ENCODE measurements at regions of chr2 and their contacts with region 1.

Region 1: GRCh38 chr2:227890495-227891079 is 19.2 kb downstream of the DAW1 start:
- DNase-seq: peak; percentile 40
- ATAC-seq: peak; percentile 72
- H3K4me3 ChIP-seq: no peak overlapping the region
- H3K27ac ChIP-seq: no peak overlapping the region
- H3K4me1 ChIP-seq: peaks cover 0 to 7% of the 10 kb centered on the region in 2 experiments; a peak in 2 of 4 replicates
- H3K27me3 ChIP-seq: no peaks in the 10 kb centered on the region
- CTCF ChIP-seq: peak; percentile 36 to 59 (median 42); a peak in 3 of 6 replicates
- POLR2A ChIP-seq: no peak
- RAD21 ChIP-seq: peak; percentile 76

Region 2: DNA sequence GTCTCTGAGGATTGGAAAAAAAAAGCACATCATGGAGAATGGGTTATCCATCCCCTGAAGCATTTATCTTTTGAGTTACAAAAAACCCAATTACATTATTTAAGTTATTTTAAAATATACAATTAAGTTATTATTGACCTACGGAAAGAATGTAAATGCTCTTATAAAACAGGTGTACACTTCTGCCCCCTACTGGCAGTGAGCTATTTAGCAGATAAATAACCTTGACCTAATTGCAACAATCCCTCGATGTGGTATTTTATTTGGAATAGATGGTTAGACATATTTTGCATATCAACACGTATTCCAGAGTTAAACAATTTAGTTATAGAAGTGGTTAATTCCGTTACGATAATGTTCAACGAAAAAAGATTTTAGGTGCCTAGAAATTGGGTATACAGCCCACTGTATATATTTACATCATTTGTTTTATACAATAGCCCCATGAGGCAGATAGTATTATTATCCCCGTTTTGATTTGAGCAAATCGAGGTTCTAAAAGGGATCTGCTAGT is 28.3 kb before region 1 on chr2:
- CTCF ChIA-PET with region 1: interaction called, 12 read pairs
- POLR2A ChIA-PET with region 1: no interaction called
- RAD21 ChIA-PET with region 1: no interaction called
- intact Hi-C with region 1: no loop called
- DNase-seq: peak; percentile 51
- ATAC-seq: no peak
- H3K4me3 ChIP-seq: peak overlapping the region in 1 of 2 experiments; percentile 42; a peak in 2 of 4 replicates
- H3K27ac ChIP-seq: peak overlapping the region; percentile 64
- H3K4me1 ChIP-seq: peaks cover 14 to 28% of the 10 kb centered on the region in 2 experiments
- H3K27me3 ChIP-seq: no peaks in the 10 kb centered on the region
- CTCF ChIP-seq: peak; percentile 68 to 84 (median 70); a peak in 5 of 6 replicates
- POLR2A ChIP-seq: no peak
- RAD21 ChIP-seq: peak; percentile 77

Region 3: DNA sequence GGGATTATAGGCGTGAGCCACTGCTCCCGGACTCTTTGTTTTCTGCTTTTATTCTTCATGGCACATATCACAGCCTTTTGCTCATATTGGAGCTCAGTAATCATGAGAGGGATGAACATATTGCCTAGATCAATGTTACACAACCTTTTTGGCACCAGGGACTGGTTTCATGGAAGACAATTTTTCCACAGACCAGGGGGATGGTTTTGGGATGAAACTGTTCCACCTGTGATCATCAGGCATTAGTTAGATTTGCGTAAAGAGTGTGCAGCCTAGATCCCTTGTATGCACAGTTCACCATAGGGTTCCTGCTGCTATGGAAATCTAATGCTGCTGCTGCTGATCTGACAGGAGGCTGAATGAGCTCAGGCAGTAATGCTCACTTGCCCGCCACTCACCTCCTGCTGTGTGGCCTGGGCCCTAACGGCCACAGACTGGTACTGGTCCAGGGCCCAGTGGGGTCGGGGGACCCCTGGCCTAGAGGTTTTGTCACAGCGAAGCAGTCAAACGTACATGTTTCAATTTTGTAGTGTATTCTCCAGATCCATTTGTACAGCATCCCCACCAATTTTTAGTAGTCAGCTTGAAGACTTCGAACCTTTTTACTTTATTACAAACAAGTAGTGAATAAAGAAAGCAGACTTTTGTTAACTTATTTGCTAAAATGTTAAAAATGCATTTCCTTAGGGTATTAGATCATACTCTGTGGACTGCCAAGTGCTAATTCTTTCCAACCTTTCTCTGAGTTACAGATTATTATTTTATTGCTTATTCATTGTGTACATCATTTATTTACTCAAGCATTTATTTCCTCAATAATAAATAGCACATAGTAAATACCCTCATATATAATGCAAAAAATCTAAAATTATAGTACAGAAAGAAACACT is 12.9 kb before region 1 on chr2:
- CTCF ChIA-PET with region 1: interaction called, 11 read pairs
- POLR2A ChIA-PET with region 1: interaction called, 3 read pairs
- RAD21 ChIA-PET with region 1: no interaction called
- intact Hi-C with region 1: no loop called
- DNase-seq: no peak
- ATAC-seq: no peak
- H3K4me3 ChIP-seq: no peak overlapping the region
- H3K27ac ChIP-seq: no peak overlapping the region
- H3K4me1 ChIP-seq: no peaks in the 10 kb centered on the region
- H3K27me3 ChIP-seq: no peaks in the 10 kb centered on the region
- CTCF ChIP-seq: no peak
- POLR2A ChIP-seq: no peak
- RAD21 ChIP-seq: no peak

Region 4: DNA sequence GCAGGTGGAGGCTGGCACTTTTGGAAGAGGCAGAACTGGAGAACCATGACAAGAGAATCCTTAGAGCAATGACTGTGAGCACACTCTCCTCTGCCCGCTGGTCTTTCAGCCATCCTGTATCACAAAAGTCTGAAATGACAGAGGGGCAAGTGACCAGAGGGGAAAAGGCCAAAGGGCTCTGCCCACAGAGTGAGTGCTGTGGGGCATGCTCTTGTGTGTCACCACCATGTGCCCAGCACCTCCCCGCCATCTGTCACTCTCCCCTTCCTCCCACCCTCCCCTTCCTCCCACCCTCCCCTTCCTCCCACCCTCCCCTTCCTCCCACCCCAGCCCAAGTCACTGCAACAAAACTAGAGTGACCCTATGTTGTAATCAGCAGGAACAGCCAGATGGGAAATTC is 12.8 kb after region 1 on chr2:
- CTCF ChIA-PET with region 1: interaction called, 10 read pairs
- POLR2A ChIA-PET with region 1: no interaction called
- RAD21 ChIA-PET with region 1: no interaction called
- intact Hi-C with region 1: no loop called
- DNase-seq: no peak
- ATAC-seq: no peak
- H3K4me3 ChIP-seq: no peak overlapping the region
- H3K27ac ChIP-seq: no peak overlapping the region
- H3K4me1 ChIP-seq: no peaks in the 10 kb centered on the region
- H3K27me3 ChIP-seq: 0 out of 2 replicates have a peak, but pooled peaks cover 9% of the 10 kb centered on the region
- CTCF ChIP-seq: no peak
- POLR2A ChIP-seq: no peak
- RAD21 ChIP-seq: no peak

Region 5: DNA sequence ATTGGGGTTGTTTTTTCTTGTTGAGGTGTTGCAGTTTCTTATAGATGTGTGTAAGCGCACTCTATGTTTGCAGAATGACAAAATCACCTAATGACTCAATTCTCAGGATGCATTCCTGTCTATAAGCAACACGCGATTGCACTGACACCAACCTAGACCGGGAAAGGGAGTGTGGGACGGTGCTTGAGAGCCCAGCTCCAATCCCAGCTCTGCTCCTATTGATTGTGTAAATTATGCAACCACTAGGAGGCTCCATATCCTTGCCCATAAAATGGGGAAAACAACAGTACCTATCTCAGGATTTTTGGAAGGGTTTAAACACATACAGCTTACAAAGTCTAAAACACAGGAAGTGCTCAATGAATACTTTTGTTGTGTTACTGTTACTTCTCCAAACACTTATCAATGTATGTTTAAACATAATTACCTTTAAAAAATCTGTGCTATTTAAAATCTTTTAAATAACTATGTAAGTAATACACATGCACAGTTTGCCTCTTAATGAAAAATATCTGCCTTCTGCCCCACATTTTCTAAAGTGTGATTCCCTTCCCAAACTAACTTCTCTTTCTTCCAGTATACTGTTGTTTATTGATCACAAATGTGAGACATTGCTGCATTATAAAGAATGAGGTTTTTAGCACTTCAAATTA is 158.4 kb after region 1 on chr2:
- CTCF ChIA-PET with region 1: interaction called, 4 read pairs
- POLR2A ChIA-PET with region 1: no interaction called
- RAD21 ChIA-PET with region 1: interaction called in 1 of 2 experiments, 9 read pairs
- intact Hi-C with region 1: loop called (anchors 5 kb)
- DNase-seq: peak; percentile 61
- ATAC-seq: peak; percentile 100
- H3K4me3 ChIP-seq: no peak overlapping the region
- H3K27ac ChIP-seq: no peak overlapping the region
- H3K4me1 ChIP-seq: peaks cover 0 to 3% of the 10 kb centered on the region in 2 experiments; a peak in 1 of 4 replicates
- H3K27me3 ChIP-seq: no peaks in the 10 kb centered on the region
- CTCF ChIP-seq: peak; percentile 69 to 76 (median 70)
- POLR2A ChIP-seq: no peak
- RAD21 ChIP-seq: peak; percentile 89

Region 6: GRCh38 chr2:228318218-228318617 is 427.6 kb after region 1 on chr2:
- CTCF ChIA-PET with region 1: no interaction called
- POLR2A ChIA-PET with region 1: no interaction called
- RAD21 ChIA-PET with region 1: no interaction called
- intact Hi-C with region 1: no loop called
- DNase-seq: peak; percentile 27
- ATAC-seq: peak; percentile 90
- H3K4me3 ChIP-seq: no peak overlapping the region
- H3K27ac ChIP-seq: no peak overlapping the region
- H3K4me1 ChIP-seq: no peaks in the 10 kb centered on the region
- H3K27me3 ChIP-seq: no peaks in the 10 kb centered on the region
- CTCF ChIP-seq: peak; percentile 34 to 75 (median 70); a peak in 5 of 6 replicates
- POLR2A ChIP-seq: no peak
- RAD21 ChIP-seq: peak; percentile 60

Region 7: GRCh38 chr2:228657807-228658402 is 767.3 kb after region 1 on chr2:
- CTCF ChIA-PET with region 1: interaction called, 10 read pairs
- POLR2A ChIA-PET with region 1: no interaction called
- RAD21 ChIA-PET with region 1: no interaction called
- intact Hi-C with region 1: loop called (anchors 2 kb)
- DNase-seq: peak; percentile 24
- ATAC-seq: peak; percentile 68; the same call in 1 of the 2 replicates
- H3K4me3 ChIP-seq: no peak overlapping the region
- H3K27ac ChIP-seq: no peak overlapping the region
- H3K4me1 ChIP-seq: no peaks in the 10 kb centered on the region
- H3K27me3 ChIP-seq: no peaks in the 10 kb centered on the region
- CTCF ChIP-seq: peak; percentile 31 to 78 (median 57); a peak in 5 of 6 replicates
- POLR2A ChIP-seq: no peak
- RAD21 ChIP-seq: peak; percentile 91

Region 8: GRCh38 chr2:229273723-229274338 is 1383.2 kb after region 1 on chr2:
- CTCF ChIA-PET with region 1: interaction called, 7 read pairs
- POLR2A ChIA-PET with region 1: no interaction called
- RAD21 ChIA-PET with region 1: no interaction called
- intact Hi-C with region 1: loop called (anchors 5 kb)
- DNase-seq: peak; percentile 81
- ATAC-seq: peak; percentile 99
- H3K4me3 ChIP-seq: peak overlapping the region in 1 of 2 experiments; percentile 18; a peak in 1 of 4 replicates
- H3K27ac ChIP-seq: no peak overlapping the region
- H3K4me1 ChIP-seq: peaks cover 0 to 10% of the 10 kb centered on the region in 2 experiments; a peak in 3 of 4 replicates
- H3K27me3 ChIP-seq: no peaks in the 10 kb centered on the region
- CTCF ChIP-seq: peak; percentile 71 to 82 (median 79); a peak in 5 of 6 replicates
- POLR2A ChIP-seq: no peak
- RAD21 ChIP-seq: peak; percentile 78